Mammary epithelial cell (primary cell): ENCODE measurements at regions of chr17 and their contacts with region 1.

Region 1: GRCh38 chr17:2416010-2416734 is 15.3 kb upstream of the MNT start:
- DNase-seq: peak; percentile 73
- H3K4me3 ChIP-seq: no peak overlapping the region
- H3K27ac ChIP-seq: peak overlapping the region; percentile 47
- H3K4me1 ChIP-seq: no peaks in the 10 kb centered on the region
- H3K27me3 ChIP-seq: no peaks in the 10 kb centered on the region
- CTCF ChIP-seq: peak; percentile 91 to 95

Region 2: GRCh38 chr17:2319051-2319450 is 97.1 kb before region 1 on chr17:
- CTCF ChIA-PET with region 1: no interaction called
- dilution Hi-C with region 1: loop called (anchors 5 kb)
- in situ Hi-C with region 1: no loop called
- intact Hi-C with region 1: no loop called
- DNase-seq: no peak
- H3K4me3 ChIP-seq: no peak overlapping the region
- H3K27ac ChIP-seq: no peak overlapping the region
- H3K4me1 ChIP-seq: no peaks in the 10 kb centered on the region
- H3K27me3 ChIP-seq: no peaks in the 10 kb centered on the region
- CTCF ChIP-seq: no peak

Region 3: GRCh38 chr17:2386400-2387085 is 29.6 kb before region 1 on chr17:
- CTCF ChIA-PET with region 1: interaction called, 60 read pairs
- dilution Hi-C with region 1: loop called (anchors 5 kb)
- in situ Hi-C with region 1: no loop called
- intact Hi-C with region 1: loop called (anchors 1 kb)
- DNase-seq: no peak
- H3K4me3 ChIP-seq: no peak overlapping the region
- H3K27ac ChIP-seq: no peak overlapping the region
- H3K4me1 ChIP-seq: peaks cover 5% of the 10 kb centered on the region
- H3K27me3 ChIP-seq: no peaks in the 10 kb centered on the region
- CTCF ChIP-seq: no peak

Region 4: DNA sequence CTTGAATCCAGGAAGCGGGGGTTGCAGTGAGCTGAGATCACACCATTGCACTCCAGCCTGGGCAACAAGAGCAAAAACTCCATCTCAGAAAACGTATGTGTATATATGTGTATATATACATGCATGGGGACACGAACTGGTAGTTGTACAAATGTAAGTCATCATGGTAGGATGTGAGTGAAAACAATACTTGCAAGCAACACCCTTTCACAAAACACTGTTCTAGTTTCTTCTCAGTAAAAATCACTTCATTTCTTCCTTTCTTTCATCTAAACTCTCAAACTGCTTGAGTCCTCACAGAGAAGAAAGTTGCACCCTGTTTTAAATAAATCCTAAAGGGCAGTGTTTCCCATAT is 43.7 kb after region 1 on chr17:
- CTCF ChIA-PET with region 1: no interaction called
- dilution Hi-C with region 1: no loop called
- in situ Hi-C with region 1: no loop called
- intact Hi-C with region 1: no loop called
- DNase-seq: no peak
- H3K4me3 ChIP-seq: no peak overlapping the region
- H3K27ac ChIP-seq: no peak overlapping the region
- H3K4me1 ChIP-seq: no peaks in the 10 kb centered on the region
- H3K27me3 ChIP-seq: no peaks in the 10 kb centered on the region
- CTCF ChIP-seq: no peak

Region 5: GRCh38 chr17:2474371-2474770 is 58.2 kb after region 1 on chr17:
- CTCF ChIA-PET with region 1: interaction called, 11 read pairs
- dilution Hi-C with region 1: no loop called
- in situ Hi-C with region 1: no loop called
- intact Hi-C with region 1: no loop called
- DNase-seq: no peak
- H3K4me3 ChIP-seq: no peak overlapping the region
- H3K27ac ChIP-seq: no peak overlapping the region
- H3K4me1 ChIP-seq: no peaks in the 10 kb centered on the region
- H3K27me3 ChIP-seq: no peaks in the 10 kb centered on the region
- CTCF ChIP-seq: no peak

Region 6: DNA sequence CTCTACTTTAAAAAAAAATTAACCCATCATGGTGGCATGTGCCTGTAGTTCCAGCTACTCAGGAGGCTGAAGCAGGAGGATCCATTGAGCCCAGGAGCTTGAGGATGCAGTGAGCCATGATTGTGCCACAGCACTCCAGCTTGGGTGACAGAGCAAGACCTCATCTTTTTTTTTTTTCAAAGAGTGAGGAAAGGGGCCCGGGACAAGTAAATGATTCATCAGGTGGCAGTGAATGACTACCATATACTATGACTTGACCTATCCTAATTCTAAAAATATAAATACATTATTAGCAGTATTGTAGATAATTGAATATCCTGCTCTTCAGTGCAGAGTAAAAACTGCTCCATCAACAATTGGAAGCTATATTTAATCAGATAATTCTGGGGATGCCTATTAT is 240.1 kb after region 1 on chr17:
- CTCF ChIA-PET with region 1: no interaction called
- dilution Hi-C with region 1: loop called (anchors 10 kb)
- in situ Hi-C with region 1: no loop called
- intact Hi-C with region 1: no loop called
- DNase-seq: no peak
- H3K4me3 ChIP-seq: no peak overlapping the region
- H3K27ac ChIP-seq: no peak overlapping the region
- H3K4me1 ChIP-seq: peaks cover 4% of the 10 kb centered on the region
- H3K27me3 ChIP-seq: no peaks in the 10 kb centered on the region
- CTCF ChIP-seq: no peak